ENCODE measurements at regions of chr19 and their contacts with region 1.

Region 1: GRCh38 chr19:48720613-48721296 is 1.2 kb upstream of the MAMSTR start:
- DNase-seq: peak; percentile 77 to 93 (median 89)
- ATAC-seq: peak; percentile 91
- H3K4me3 ChIP-seq: peak overlapping the region; percentile 92
- H3K4me3 Mint-ChIP-seq: peak overlapping the region; percentile 80 to 99 (median 97)
- H3K27ac ChIP-seq: peak overlapping the region; percentile 80
- H3K27ac Mint-ChIP-seq: peak overlapping the region; percentile 98 to 100 (median 99)
- H3K4me1 ChIP-seq: peaks cover 5 to 17% of the 10 kb centered on the region in 2 donors
- H3K4me1 Mint-ChIP-seq: peaks cover 19 to 30% (median 25%) of the 10 kb centered on the region in 7 donors
- H3K27me3 ChIP-seq: no peaks in the 10 kb centered on the region
- H3K27me3 Mint-ChIP-seq: no peaks in the 10 kb centered on the region

Region 2: GRCh38 chr19:48618916-48619691 is 101.7 kb before region 1 on chr19 and contains the starts of genes RPL18 and SPHK2:
- CTCF ChIA-PET with region 1: no interaction called
- POLR2A ChIA-PET with region 1: interaction called, 7 read pairs
- intact Hi-C with region 1: loop called (anchors 1 kb)
- DNase-seq: peak; percentile 89 to 97 (median 95)
- ATAC-seq: peak; percentile 89
- H3K4me3 ChIP-seq: peak within 1 kb of the TSS; percentile 96
- H3K4me3 Mint-ChIP-seq: peak within 1 kb of the TSS; percentile 88 to 99 (median 96)
- H3K27ac ChIP-seq: peak within 1 kb of the TSS; percentile 95
- H3K27ac Mint-ChIP-seq: peak within 1 kb of the TSS; percentile 96 to 99 (median 98)
- H3K4me1 ChIP-seq: peaks cover 26 to 45% of the 10 kb centered on the region in 2 donors
- H3K4me1 Mint-ChIP-seq: peaks cover 40 to 64% (median 54%) of the 10 kb centered on the region in 7 donors
- H3K27me3 ChIP-seq: no peaks in the 10 kb centered on the region
- H3K27me3 Mint-ChIP-seq: no peaks in the 10 kb centered on the region
- total RNA-seq, gene RPL18: 1,570 to 2,826 (median 2,745) TPM
- total RNA-seq, gene SPHK2: 20.1 to 34.7 (median 30.5) TPM

Region 3: DNA sequence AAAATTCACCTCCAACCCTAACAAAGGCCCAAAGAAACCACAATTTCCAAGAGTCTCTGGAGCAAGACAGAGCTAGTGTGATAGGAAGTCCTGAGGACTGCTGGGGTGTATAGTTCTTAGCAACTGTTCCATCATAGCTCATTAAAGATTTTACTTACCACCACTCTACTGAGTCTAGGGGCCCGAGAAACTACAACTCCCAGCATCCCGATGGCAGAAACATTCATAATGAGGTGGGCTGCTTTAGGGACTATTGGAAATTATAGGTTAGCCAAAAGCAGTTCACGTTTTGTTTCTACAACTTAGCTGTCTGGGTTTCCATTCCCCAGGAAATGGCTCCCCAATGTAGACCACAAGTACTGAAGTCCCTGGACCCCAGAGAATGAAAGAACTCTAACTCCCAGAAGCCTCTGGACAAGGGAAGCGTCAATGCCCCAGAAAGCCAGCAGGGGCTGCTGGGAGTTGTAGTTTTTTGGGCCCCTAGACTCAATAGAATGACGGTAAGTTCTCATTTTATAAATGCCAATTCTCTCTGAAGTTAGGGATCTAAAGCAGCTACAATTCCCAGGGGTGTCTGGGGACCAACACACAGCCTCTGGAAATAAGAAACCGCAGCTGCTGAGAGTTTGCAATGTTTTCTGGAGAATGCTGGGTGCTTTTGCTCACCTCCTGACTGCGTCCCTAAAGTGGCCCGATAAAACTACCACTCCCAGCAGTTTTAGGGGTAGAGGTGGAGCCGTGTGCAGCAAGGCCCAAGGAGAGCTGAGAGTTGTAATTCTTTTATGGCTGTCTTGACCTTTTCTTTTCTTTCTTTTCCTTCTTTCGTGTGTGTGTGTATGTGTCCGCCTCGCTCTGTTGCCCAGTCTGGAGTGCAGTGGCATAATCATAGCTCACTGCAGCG is 255.4 kb after region 1 on chr19:
- CTCF ChIA-PET with region 1: no interaction called
- POLR2A ChIA-PET with region 1: no interaction called
- intact Hi-C with region 1: no loop called
- DNase-seq: peak in 6 of 9 donors; percentile 34 to 53 (median 50)
- ATAC-seq: peak; percentile 78
- H3K4me3 ChIP-seq: no peak overlapping the region
- H3K4me3 Mint-ChIP-seq: no peak overlapping the region
- H3K27ac ChIP-seq: no peak overlapping the region
- H3K27ac Mint-ChIP-seq: peak overlapping the region in 2 of 9 donors; percentile 3 to 23
- H3K4me1 ChIP-seq: no peaks in the 10 kb centered on the region
- H3K4me1 Mint-ChIP-seq: peaks cover 0 to 7% (median under 1%) of the 10 kb centered on the region in 7 donors
- H3K27me3 ChIP-seq: no peaks in the 10 kb centered on the region
- H3K27me3 Mint-ChIP-seq: no peaks in the 10 kb centered on the region